Activated CD8-positive, alpha-beta T cell treated with anti-CD3 and anti-CD28 coated beads for 36 hours (primary cell): ENCODE measurements at regions of chr19 and their contacts with region 1.

Region 1: DNA sequence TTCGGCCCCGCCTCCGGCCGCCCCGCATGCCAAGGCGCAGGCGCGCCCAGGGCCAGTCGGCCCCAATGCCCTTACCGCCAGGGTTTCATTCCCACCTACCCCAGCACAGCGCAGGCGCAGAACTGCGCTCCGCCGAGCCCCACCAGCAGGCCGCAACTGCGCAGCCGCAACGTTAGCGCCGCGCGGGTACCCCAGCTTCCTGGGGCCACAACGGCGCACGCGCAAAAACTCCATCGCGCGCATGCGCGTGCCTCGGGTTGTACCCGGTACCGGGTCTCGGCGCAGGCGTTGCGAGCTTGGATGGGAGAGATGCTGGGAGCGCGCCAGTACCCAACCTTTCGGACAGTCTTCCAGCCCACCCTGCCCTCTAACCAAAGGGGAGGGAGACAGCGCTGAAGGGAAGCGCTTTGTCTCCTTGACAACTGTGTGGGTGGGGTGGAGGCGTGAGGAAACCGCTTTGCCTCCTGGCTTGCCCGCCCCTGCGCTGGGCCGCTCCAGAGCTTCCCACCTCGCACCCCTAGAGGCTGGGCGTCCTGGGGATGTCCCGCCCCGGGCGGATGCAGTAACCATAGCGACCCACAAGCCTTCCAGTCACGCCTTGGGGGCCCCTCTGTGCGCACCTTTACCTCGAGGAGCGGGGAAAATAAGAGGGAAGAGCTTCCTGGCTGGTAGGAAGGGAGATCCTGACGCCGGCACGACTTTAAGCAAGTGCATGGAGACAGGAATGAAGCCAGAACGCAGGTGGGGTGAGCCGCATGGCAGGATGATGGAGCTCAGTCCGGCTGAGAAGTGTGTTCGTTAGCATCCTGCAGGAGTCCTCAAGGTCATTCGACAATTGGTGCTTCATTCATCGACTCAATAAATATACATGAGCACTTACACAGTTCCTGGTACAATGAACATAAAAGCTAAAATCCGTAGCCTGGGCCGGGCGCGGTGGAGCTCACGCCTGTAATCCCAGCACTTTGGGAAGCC is 525 bp upstream of the MYPOP start:
- DNase-seq: peak; percentile 98
- ATAC-seq: peak; percentile 90
- H3K4me3 Mint-ChIP-seq: peak overlapping the region; percentile 83
- H3K27ac Mint-ChIP-seq: peak overlapping the region; percentile 76
- H3K4me1 Mint-ChIP-seq: peaks cover 13% of the 10 kb centered on the region
- H3K27me3 Mint-ChIP-seq: no peaks in the 10 kb centered on the region
- CTCF ChIP-seq: no peak

Region 2: GRCh38 chr19:45862564-45863334 is 40.2 kb before region 1 on chr19 and contains the start of gene SYMPK:
- CTCF ChIA-PET with region 1: interaction called, 11 read pairs
- POLR2A ChIA-PET with region 1: interaction called, 8 read pairs
- intact Hi-C with region 1: no loop called
- DNase-seq: peak; percentile 99
- ATAC-seq: peak; percentile 98
- H3K4me3 Mint-ChIP-seq: peak within 1 kb of the TSS; percentile 85
- H3K27ac Mint-ChIP-seq: peak within 1 kb of the TSS; percentile 98
- H3K4me1 Mint-ChIP-seq: peaks cover 25% of the 10 kb centered on the region
- H3K27me3 Mint-ChIP-seq: peaks cover 25% of the 10 kb centered on the region
- CTCF ChIP-seq: no peak
- total RNA-seq, gene SYMPK: 96.8 to 114 TPM

Region 3: GRCh38 chr19:45886427-45887199 is 16.3 kb before region 1 on chr19:
- CTCF ChIA-PET with region 1: interaction called, 14 read pairs
- POLR2A ChIA-PET with region 1: interaction called, 5 read pairs
- intact Hi-C with region 1: no loop called
- DNase-seq: peak; percentile 98
- ATAC-seq: peak; percentile 85
- H3K4me3 Mint-ChIP-seq: peak overlapping the region; percentile 84
- H3K27ac Mint-ChIP-seq: peak overlapping the region; percentile 92
- H3K4me1 Mint-ChIP-seq: peaks cover 16% of the 10 kb centered on the region
- H3K27me3 Mint-ChIP-seq: no peaks in the 10 kb centered on the region
- CTCF ChIP-seq: no peak

Region 4: GRCh38 chr19:46115396-46116106 is 212.6 kb after region 1 on chr19:
- CTCF ChIA-PET with region 1: no interaction called
- POLR2A ChIA-PET with region 1: no interaction called
- intact Hi-C with region 1: no loop called
- DNase-seq: peak; percentile 88
- ATAC-seq: peak; percentile 99
- H3K4me3 Mint-ChIP-seq: peak overlapping the region; percentile 1
- H3K27ac Mint-ChIP-seq: peak overlapping the region; percentile 28
- H3K4me1 Mint-ChIP-seq: peaks cover 19% of the 10 kb centered on the region
- H3K27me3 Mint-ChIP-seq: peaks cover 57% of the 10 kb centered on the region
- CTCF ChIP-seq: no peak